ENCODE measurements at regions of chr7 and their contacts with region 1.

Region 1: DNA sequence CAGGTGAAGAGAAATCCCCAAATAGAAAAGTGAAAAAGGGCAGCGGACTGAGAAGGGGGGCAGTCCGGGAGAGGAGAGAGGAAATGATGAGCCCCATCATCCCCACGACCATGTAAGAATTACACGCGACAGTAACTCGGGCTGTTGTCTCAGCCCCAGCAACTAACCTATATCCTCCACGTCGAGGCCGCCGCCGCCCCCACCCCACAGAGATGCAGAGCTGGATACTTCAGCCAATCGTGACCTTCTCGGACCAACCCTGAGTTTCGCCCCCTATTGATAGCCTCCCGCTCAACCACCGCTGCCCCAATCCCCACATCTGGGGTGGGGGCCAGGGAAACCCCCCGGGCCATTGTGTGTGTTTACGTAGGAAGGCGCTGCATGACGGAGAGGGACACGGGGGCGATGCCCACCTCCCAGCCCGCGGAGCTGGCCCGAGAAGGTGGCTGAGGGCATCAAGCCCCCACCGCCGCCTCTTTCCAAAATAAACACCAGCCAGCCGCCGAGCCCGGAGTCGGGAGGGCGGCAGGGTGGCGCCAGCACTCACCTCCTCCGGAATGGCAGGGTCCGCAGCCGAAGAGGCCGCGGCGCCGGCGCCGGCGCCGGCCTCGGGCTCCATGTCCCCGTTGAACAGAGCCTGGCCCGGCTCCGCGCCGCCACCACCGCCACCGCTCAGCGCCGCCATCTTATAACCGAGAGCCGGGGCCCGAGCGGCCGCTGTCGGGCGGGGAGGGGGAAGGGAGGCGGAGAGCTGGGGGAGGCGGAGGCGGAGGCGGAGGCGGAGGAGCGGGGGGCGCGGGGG is 509 bp downstream of the BRAF start:
- DNase-seq: peak; percentile 58 to 90 (median 77)
- H3K4me3 ChIP-seq: peak overlapping the region; percentile 72 to 86 (median 75)
- H3K4me3 Mint-ChIP-seq: no peak overlapping the region
- H3K27ac ChIP-seq: peak overlapping the region; percentile 74 to 95
- H3K27ac Mint-ChIP-seq: no peak overlapping the region
- H3K4me1 ChIP-seq: peaks cover 13 to 21% of the 10 kb centered on the region in 2 donors
- H3K4me1 Mint-ChIP-seq: peaks cover 4% of the 10 kb centered on the region
- H3K27me3 ChIP-seq: no peaks in the 10 kb centered on the region
- H3K27me3 Mint-ChIP-seq: peaks cover 0 to 10% (median 0%) of the 10 kb centered on the region in 3 donors
- CTCF ChIP-seq: peak; percentile 23

Region 2: DNA sequence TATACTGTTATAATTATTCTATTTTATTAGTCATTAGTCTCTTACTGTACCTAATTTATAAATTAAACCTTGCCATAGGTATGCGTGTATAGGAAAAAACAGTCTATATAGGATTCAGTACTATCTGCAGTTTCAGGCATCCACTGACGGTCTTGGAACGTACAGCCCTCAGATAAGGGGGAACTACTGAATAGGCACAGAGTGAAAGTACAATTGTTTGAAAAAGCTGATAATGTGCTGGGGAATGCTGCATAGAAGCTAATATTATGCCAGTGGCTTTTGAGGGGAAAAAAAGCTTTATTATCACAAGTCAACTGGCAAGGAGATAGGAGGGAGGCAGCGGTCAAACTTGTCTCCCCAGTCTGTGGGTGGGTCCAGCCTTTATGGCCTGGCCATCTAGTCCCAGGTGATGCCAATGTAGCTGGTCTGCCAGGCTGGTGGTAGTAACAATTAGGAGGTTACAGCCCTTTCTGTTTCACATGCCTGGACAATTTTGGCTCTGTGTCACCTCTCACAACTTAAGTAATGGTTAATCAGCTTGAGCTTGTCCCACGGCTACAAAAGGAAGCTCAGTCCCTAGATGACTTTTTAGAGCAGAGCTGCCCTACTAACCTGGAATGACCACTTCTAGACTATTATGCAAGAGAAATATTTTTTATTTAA is 1591.4 kb before region 1 on chr7:
- intact Hi-C with region 1: loop called in 1 of 2 experiments (anchors 10 kb)
- DNase-seq: no peak
- H3K4me3 ChIP-seq: no peak overlapping the region
- H3K4me3 Mint-ChIP-seq: no peak overlapping the region
- H3K27ac ChIP-seq: no peak overlapping the region
- H3K27ac Mint-ChIP-seq: no peak overlapping the region
- H3K4me1 ChIP-seq: no peaks in the 10 kb centered on the region
- H3K4me1 Mint-ChIP-seq: peaks cover 2% of the 10 kb centered on the region
- H3K27me3 ChIP-seq: no peaks in the 10 kb centered on the region
- H3K27me3 Mint-ChIP-seq: peaks cover 0 to 4% (median 3%) of the 10 kb centered on the region in 3 donors
- CTCF ChIP-seq: no peak

Region 3: GRCh38 chr7:140062528-140063299 is 861.5 kb before region 1 on chr7 and contains the start of gene PARP12:
- intact Hi-C with region 1: loop called in 1 of 2 experiments (anchors 10 kb)
- DNase-seq: peak; percentile 88 to 92 (median 91)
- H3K4me3 ChIP-seq: peak within 1 kb of the TSS; percentile 71 to 89 (median 79)
- H3K4me3 Mint-ChIP-seq: peak within 1 kb of the TSS; percentile 90 to 96
- H3K27ac ChIP-seq: peak within 1 kb of the TSS; percentile 73 to 85
- H3K27ac Mint-ChIP-seq: peak within 1 kb of the TSS; percentile 84 to 92 (median 90)
- H3K4me1 ChIP-seq: peaks cover 23 to 45% of the 10 kb centered on the region in 2 donors
- H3K4me1 Mint-ChIP-seq: peaks cover 38% of the 10 kb centered on the region
- H3K27me3 ChIP-seq: no peaks in the 10 kb centered on the region
- H3K27me3 Mint-ChIP-seq: peaks cover 1 to 9% (median 7%) of the 10 kb centered on the region in 3 donors
- CTCF ChIP-seq: no peak
- polyA plus RNA-seq, gene PARP12: 16.7 to 116 (median 37.8) TPM

Region 4: DNA sequence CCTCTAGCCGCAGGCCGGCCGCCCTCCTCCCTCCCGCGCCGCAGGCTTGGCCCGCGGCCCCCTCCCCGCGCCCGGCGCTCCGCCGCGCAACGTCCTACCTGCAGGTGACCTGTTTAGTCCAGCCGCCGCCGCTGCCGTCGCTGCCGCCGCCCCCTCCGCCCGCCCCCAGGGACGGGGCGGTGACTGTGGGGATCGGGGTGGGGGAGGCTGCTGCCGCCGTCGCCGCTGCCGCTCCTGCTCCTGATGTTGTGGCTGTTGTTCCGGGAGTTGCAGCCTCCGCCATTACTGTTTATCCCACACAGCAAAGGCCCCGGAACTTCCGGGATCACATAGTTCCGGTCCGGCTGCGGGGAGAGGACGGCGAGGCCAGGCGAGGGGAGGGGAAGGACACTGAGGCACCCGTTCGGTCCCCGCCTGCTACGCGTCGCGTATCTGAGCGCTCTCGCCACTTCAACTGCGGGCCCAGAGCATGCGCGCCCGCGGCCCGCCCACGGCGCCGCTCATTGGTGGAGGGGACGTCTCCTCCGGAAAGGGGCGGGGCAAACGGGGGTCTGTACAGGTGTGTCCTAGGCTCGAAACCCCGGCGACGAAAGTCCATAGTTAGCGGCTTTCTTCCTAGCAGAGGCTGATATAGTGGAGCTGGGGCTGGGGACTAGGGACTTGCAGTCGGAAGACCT is 445.0 kb before region 1 on chr7 and contains the start of gene MKRN1:
- intact Hi-C with region 1: loop called (anchors 5 kb)
- DNase-seq: peak; percentile 86 to 92 (median 89)
- H3K4me3 ChIP-seq: peak within 1 kb of the TSS; percentile 94 to 99 (median 96)
- H3K4me3 Mint-ChIP-seq: peak within 1 kb of the TSS; percentile 97 to 99
- H3K27ac ChIP-seq: peak within 1 kb of the TSS; percentile 89 to 96
- H3K27ac Mint-ChIP-seq: peak within 1 kb of the TSS; percentile 91 to 98 (median 98)
- H3K4me1 ChIP-seq: peaks cover 22% of the 10 kb centered on the region in 2 donors
- H3K4me1 Mint-ChIP-seq: peaks cover 29% of the 10 kb centered on the region
- H3K27me3 ChIP-seq: no peaks in the 10 kb centered on the region
- H3K27me3 Mint-ChIP-seq: peaks cover 0 to 4% (median 0%) of the 10 kb centered on the region in 3 donors
- CTCF ChIP-seq: no peak
- polyA plus RNA-seq, gene MKRN1: 88.4 to 160 (median 127) TPM

Region 5: DNA sequence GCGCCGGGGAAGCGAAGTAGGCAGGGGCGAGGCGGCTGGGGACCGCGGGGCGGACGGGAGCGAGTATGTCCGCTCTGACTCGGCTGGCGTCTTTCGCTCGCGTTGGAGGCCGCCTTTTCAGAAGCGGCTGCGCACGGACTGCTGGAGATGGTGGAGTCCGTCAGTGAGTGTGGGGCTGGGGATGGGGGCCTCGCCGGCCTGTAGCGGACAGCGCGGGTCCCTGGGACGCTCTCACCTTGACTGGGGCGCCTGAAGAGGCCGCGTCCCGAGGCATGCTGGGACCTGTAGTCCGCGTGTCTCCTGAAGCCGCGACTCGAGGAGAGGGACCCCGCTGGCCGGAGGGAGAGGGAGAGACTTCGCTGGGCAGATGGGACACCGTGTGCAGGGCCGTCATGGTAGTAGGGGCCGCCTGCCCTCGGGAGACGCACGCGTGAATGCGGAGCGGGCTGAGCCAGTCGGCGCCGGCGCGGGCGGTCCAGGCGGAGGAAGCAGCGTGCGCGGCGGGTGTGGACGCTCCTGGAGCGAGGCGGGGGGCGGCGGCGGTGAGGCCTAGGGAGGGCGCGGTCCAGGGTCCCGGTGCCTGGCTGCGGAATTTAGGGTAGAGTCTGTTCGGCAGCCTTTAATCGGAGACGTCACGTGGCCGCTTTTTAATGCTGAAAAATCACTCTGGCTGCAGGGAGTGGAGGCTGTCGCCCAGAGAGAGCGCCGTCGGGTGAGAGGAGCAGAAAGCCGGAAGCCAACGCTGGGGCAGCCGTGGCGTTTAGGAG is 227.4 kb before region 1 on chr7 and contains the start of gene NDUFB2:
- intact Hi-C with region 1: loop called in 1 of 2 experiments (anchors 10 kb)
- DNase-seq: peak; percentile 44 to 56 (median 53)
- H3K4me3 ChIP-seq: peak within 1 kb of the TSS; percentile 82 to 97 (median 94)
- H3K4me3 Mint-ChIP-seq: peak within 1 kb of the TSS; percentile 97 to 99
- H3K27ac ChIP-seq: peak within 1 kb of the TSS; percentile 77 to 87
- H3K27ac Mint-ChIP-seq: peak within 1 kb of the TSS; percentile 92 to 99 (median 96)
- H3K4me1 ChIP-seq: peaks cover 15 to 21% of the 10 kb centered on the region in 2 donors
- H3K4me1 Mint-ChIP-seq: peaks cover 26% of the 10 kb centered on the region
- H3K27me3 ChIP-seq: no peaks in the 10 kb centered on the region
- H3K27me3 Mint-ChIP-seq: peaks cover 0 to 1% (median 1%) of the 10 kb centered on the region in 3 donors
- CTCF ChIP-seq: no peak
- polyA plus RNA-seq, gene NDUFB2: 250 to 516 (median 479) TPM

Region 6: GRCh38 chr7:141014524-141015395 is 90.5 kb after region 1 on chr7 and contains the start of gene MRPS33:
- intact Hi-C with region 1: loop called (anchors 5 kb)
- DNase-seq: peak; percentile 89 to 93 (median 91)
- H3K4me3 ChIP-seq: peak within 1 kb of the TSS; percentile 55 to 83 (median 78)
- H3K4me3 Mint-ChIP-seq: peak within 1 kb of the TSS; percentile 92 to 98
- H3K27ac ChIP-seq: peak within 1 kb of the TSS; percentile 71 to 92
- H3K27ac Mint-ChIP-seq: peak within 1 kb of the TSS; percentile 93 to 99 (median 96)
- H3K4me1 ChIP-seq: peaks cover 12 to 18% of the 10 kb centered on the region in 2 donors
- H3K4me1 Mint-ChIP-seq: peaks cover 21% of the 10 kb centered on the region
- H3K27me3 ChIP-seq: peaks cover 12 to 13% of the 10 kb centered on the region in 2 donors
- H3K27me3 Mint-ChIP-seq: peaks cover 14 to 22% (median 16%) of the 10 kb centered on the region in 3 donors
- CTCF ChIP-seq: peak; percentile 43
- polyA plus RNA-seq, gene MRPS33: 8.9 to 52.7 (median 45.0) TPM

Region 7: DNA sequence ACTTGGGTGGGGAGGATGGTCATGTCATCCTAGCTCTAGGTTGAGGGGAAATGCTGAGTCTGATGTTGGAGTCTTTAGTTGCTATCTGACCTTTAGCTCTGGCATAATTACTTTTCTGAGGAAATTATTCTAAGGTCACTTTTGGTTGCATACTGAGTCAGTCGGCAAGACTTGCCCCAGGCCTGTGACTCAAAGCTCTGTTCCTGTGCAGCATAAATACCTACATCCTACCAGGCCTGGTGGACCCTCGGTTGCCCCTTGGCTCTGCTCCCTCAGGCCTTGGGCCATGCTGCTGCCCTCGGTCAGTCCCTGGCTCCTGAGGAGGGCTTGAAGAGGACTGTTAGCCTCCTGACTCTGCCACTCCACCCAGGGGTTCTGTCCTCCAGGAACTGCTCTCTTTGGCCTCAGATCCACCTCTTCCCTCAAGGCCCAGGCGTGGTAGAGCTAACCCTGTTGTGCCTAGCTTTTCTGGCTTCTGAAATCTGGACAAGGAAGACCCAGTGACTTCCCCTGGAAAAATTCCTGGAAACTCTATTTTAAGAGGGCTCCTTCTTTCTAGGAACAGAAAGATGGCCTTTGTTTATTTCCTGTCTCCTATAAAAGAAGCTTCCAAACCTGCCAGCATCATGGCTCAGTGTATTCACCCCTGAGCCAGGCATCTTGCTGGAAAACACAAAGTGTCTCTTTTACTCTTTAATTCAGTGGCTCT is 220.9 kb after region 1 on chr7:
- intact Hi-C with region 1: no loop called
- DNase-seq: no peak
- H3K4me3 ChIP-seq: no peak overlapping the region
- H3K4me3 Mint-ChIP-seq: no peak overlapping the region
- H3K27ac ChIP-seq: no peak overlapping the region
- H3K27ac Mint-ChIP-seq: no peak overlapping the region
- H3K4me1 ChIP-seq: no peaks in the 10 kb centered on the region
- H3K4me1 Mint-ChIP-seq: no peaks in the 10 kb centered on the region
- H3K27me3 ChIP-seq: no peaks in the 10 kb centered on the region
- H3K27me3 Mint-ChIP-seq: peaks cover 1 to 6% (median 2%) of the 10 kb centered on the region in 3 donors
- CTCF ChIP-seq: no peak

Measured in CD14-positive monocyte (primary cell).